Activated T-helper 2 cell treated with anti-CD3 and anti-CD28 coated beads, Interferon-gamma antibody, Interleukin-2, Interleukin-4, amounts not matched to agents 10 μg/mL and 5 μg/mL and 100 μg/mL, durations not matched to agents 14 hours and 24 hours and 36 hours (primary cell): ENCODE measurements at regions of chr16 and their contacts with region 1.

Region 1: DNA sequence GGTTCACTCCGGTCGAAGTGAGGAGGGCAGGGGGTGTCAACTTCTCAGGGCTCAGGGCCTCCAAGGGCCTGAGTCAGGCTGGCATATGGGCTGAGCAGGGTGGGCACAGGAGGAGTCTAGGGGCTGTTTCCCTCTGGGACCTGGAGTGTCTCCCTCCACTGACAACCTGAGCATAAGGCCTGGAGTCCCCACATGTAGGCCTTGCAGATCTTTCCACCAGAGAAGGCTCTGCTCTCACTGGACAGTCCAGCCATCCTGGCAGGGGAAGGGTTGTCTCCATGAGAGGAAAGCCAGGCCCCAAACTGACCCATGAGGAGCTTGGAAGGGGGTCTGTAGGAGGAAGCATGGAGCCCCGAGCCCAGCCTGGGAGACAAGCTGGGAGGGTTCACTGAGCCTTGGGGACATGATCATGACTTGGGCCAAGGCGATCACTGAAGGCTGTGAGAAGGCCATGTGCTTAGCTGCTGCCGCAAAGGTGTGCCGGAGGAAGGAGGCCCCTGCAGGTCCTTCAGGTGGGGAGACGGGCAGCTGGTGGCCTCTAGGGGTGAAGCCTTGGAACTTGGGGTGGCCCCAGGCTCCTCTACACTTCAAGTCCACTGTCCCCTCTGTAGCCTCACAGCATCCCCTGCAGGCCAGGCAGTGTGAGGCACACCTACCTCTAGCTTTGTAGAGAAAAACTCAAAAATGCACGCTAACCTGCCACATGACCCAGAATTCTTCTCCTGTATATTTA is 9.9 kb downstream of the CMTM2 start:
- DNase-seq: peak; percentile 55
- H3K4me3 Mint-ChIP-seq: peak overlapping the region; percentile 72
- H3K27ac Mint-ChIP-seq: peak overlapping the region; percentile 59
- H3K4me1 Mint-ChIP-seq: peaks cover 35% of the 10 kb centered on the region
- H3K27me3 Mint-ChIP-seq: no peaks in the 10 kb centered on the region

Region 2: GRCh38 chr16:66516808-66517585 is 72.2 kb before region 1 on chr16:
- intact Hi-C with region 1: loop called (anchors 2 kb)
- DNase-seq: peak; percentile 75
- H3K4me3 Mint-ChIP-seq: peak overlapping the region; percentile 82
- H3K27ac Mint-ChIP-seq: peak overlapping the region; percentile 99
- H3K4me1 Mint-ChIP-seq: peaks cover 59% of the 10 kb centered on the region
- H3K27me3 Mint-ChIP-seq: no peaks in the 10 kb centered on the region

Region 3: GRCh38 chr16:66562407-66562806 is 26.7 kb before region 1 on chr16:
- intact Hi-C with region 1: loop called (anchors 2 kb)
- DNase-seq: no peak
- H3K4me3 Mint-ChIP-seq: no peak overlapping the region
- H3K27ac Mint-ChIP-seq: peak overlapping the region; percentile 58
- H3K4me1 Mint-ChIP-seq: peaks cover 52% of the 10 kb centered on the region
- H3K27me3 Mint-ChIP-seq: no peaks in the 10 kb centered on the region

Region 4: DNA sequence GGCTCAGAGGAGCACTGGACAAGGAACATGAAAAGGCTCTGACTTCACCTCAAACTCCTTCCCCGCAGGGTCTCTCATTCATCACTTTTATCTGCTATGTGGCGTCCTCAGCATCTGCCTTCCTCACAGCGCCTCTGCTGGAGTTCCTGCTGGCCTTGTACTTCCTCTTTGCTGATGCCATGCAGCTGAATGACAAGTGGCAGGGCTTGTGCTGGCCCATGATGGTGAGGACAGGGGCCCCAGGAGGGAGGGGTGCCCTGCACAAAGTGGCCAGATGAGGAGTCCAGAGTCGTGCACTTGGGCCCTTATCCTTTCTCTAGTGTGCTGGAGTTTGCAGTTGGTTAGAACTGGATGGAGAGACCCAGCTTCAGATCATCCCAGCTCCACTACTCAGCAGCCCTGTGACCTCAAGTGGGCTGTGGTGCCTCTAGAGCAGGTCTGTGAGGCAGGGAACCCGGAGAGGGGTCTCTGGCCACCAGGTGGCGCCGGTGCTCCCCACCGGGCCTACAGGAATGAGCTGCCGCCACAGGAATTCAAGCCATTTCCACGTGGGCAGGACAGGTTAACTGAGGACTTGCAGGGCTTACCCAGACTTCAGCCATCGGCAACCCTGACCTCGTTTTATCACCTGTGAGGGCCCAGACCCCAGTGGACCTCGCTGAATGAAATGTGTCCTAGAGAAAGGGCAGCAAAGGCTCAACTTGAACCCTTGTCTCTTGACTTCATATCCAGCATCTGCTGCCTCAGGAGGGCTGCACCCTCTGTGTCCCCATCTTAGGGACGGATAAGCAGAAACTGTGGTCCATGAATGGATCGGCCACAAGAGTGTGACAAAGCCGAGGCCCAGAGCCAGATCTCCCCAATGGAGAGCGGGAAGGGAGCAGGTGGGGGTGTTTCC is 19.3 kb after region 1 on chr16:
- intact Hi-C with region 1: loop called (anchors 1 kb)
- DNase-seq: peak; percentile 72
- H3K4me3 Mint-ChIP-seq: peak overlapping the region; percentile 57
- H3K27ac Mint-ChIP-seq: peak overlapping the region; percentile 68
- H3K4me1 Mint-ChIP-seq: peaks cover 27% of the 10 kb centered on the region
- H3K27me3 Mint-ChIP-seq: no peaks in the 10 kb centered on the region